Activated CD8-positive, alpha-beta T cell treated with anti-CD3 and anti-CD28 coated beads for 36 hours (primary cell): ENCODE measurements at regions of chr11 and their contacts with region 1.

Region 1: GRCh38 chr11:250740-251299 is 14.0 kb downstream of the PSMD13 start:
- DNase-seq: peak; percentile 91
- ATAC-seq: peak; percentile 98
- H3K4me3 Mint-ChIP-seq: no peak overlapping the region
- H3K27ac Mint-ChIP-seq: peak overlapping the region; percentile 82
- H3K4me1 Mint-ChIP-seq: peaks cover 18% of the 10 kb centered on the region
- H3K27me3 Mint-ChIP-seq: no peaks in the 10 kb centered on the region
- CTCF ChIP-seq: peak; percentile 83

Region 2: DNA sequence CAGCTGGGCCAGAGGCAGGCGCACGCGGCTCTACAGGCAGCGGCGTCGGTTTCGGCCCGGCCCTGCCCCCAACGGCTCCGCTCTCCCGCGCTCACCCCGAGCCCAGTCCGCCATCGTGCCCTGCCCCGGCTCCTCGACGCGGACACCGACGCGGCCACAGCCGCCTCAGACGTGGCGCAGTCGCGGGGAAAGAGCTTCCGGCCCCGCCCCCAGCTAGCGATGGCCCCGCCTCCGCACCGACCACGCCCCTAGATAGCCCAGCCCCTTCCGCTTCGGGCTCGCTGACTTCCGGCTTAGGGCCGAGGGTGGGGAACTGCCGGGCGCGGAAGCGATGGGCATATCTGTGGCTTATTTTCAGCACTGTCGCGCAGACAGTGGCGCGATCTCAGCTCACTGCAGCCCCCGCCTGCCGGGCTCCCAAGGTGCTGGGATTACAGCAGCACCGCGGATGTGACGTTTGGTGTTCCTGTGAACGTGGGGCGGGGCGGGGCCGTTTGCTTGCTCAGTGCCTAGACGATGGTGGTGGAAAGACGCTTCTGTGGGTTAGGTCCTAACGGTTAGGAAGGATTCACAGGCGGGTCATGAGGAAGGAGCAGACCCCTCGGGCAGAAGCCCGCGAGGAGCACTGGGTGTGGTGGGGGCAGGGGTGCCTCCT is 43.5 kb before region 1 on chr11 and contains the starts of genes BET1L and RIC8A:
- CTCF ChIA-PET with region 1: interaction called, 16 read pairs
- POLR2A ChIA-PET with region 1: no interaction called
- intact Hi-C with region 1: no loop called
- DNase-seq: peak; percentile 99
- ATAC-seq: peak; percentile 85
- H3K4me3 Mint-ChIP-seq: peak within 1 kb of the TSS; percentile 96
- H3K27ac Mint-ChIP-seq: peak within 1 kb of the TSS; percentile 99
- H3K4me1 Mint-ChIP-seq: peaks cover 55% of the 10 kb centered on the region
- H3K27me3 Mint-ChIP-seq: no peaks in the 10 kb centered on the region
- CTCF ChIP-seq: no peak
- total RNA-seq, gene BET1L: 58.4 to 68.9 TPM
- total RNA-seq, gene RIC8A: 96.5 to 108 TPM

Region 3: GRCh38 chr11:269146-269890 is 18.5 kb after region 1 on chr11:
- CTCF ChIA-PET with region 1: interaction called, 31 read pairs
- POLR2A ChIA-PET with region 1: interaction called, 8 read pairs
- intact Hi-C with region 1: no loop called
- DNase-seq: peak; percentile 72
- ATAC-seq: peak; percentile 38
- H3K4me3 Mint-ChIP-seq: peak overlapping the region; percentile 89
- H3K27ac Mint-ChIP-seq: peak overlapping the region; percentile 98
- H3K4me1 Mint-ChIP-seq: peaks cover 37% of the 10 kb centered on the region
- H3K27me3 Mint-ChIP-seq: no peaks in the 10 kb centered on the region
- CTCF ChIP-seq: peak; percentile 46

Region 4: GRCh38 chr11:299951-300735 is 49.3 kb after region 1 on chr11:
- CTCF ChIA-PET with region 1: interaction called, 51 read pairs
- POLR2A ChIA-PET with region 1: interaction called, 6 read pairs
- intact Hi-C with region 1: no loop called
- DNase-seq: peak; percentile 68
- ATAC-seq: peak; percentile 14
- H3K4me3 Mint-ChIP-seq: no peak overlapping the region
- H3K27ac Mint-ChIP-seq: no peak overlapping the region
- H3K4me1 Mint-ChIP-seq: peaks cover 49% of the 10 kb centered on the region
- H3K27me3 Mint-ChIP-seq: peaks cover 6% of the 10 kb centered on the region
- CTCF ChIP-seq: no peak

Region 5: DNA sequence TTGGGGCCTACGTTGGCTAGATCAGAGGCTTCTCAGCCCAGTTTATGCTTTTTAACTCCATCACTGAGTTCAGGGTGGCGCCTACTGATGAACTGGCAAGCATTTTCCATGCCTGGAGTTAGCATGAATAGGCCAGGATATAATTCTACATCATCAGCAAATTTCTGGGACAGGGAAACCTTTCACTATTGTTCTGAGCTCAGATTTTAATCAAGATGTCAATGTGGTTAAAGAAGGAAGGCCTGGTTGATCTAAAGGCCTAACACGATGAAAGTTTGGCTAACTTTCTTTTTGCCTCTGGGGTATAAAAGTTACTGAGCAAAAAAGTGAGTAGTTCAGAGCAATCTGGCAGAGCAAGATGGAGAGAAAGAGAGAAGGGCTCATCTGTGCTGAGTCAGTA is 91.5 kb after region 1 on chr11:
- CTCF ChIA-PET with region 1: interaction called, 19 read pairs
- POLR2A ChIA-PET with region 1: no interaction called
- intact Hi-C with region 1: no loop called
- DNase-seq: no peak
- ATAC-seq: no peak
- H3K4me3 Mint-ChIP-seq: no peak overlapping the region
- H3K27ac Mint-ChIP-seq: no peak overlapping the region
- H3K4me1 Mint-ChIP-seq: peaks cover 16% of the 10 kb centered on the region
- H3K27me3 Mint-ChIP-seq: no peaks in the 10 kb centered on the region
- CTCF ChIP-seq: no peak

Region 6: GRCh38 chr11:447923-448731 is 197.3 kb after region 1 on chr11:
- CTCF ChIA-PET with region 1: interaction called, 14 read pairs
- POLR2A ChIA-PET with region 1: interaction called, 4 read pairs
- intact Hi-C with region 1: no loop called
- DNase-seq: peak; percentile 98
- ATAC-seq: peak; percentile 89
- H3K4me3 Mint-ChIP-seq: peak overlapping the region; percentile 86
- H3K27ac Mint-ChIP-seq: peak overlapping the region; percentile 94
- H3K4me1 Mint-ChIP-seq: peaks cover 20% of the 10 kb centered on the region
- H3K27me3 Mint-ChIP-seq: no peaks in the 10 kb centered on the region
- CTCF ChIP-seq: peak; percentile 79